ENCODE measurements at regions of chr3 and their contacts with region 1.

Region 1: DNA sequence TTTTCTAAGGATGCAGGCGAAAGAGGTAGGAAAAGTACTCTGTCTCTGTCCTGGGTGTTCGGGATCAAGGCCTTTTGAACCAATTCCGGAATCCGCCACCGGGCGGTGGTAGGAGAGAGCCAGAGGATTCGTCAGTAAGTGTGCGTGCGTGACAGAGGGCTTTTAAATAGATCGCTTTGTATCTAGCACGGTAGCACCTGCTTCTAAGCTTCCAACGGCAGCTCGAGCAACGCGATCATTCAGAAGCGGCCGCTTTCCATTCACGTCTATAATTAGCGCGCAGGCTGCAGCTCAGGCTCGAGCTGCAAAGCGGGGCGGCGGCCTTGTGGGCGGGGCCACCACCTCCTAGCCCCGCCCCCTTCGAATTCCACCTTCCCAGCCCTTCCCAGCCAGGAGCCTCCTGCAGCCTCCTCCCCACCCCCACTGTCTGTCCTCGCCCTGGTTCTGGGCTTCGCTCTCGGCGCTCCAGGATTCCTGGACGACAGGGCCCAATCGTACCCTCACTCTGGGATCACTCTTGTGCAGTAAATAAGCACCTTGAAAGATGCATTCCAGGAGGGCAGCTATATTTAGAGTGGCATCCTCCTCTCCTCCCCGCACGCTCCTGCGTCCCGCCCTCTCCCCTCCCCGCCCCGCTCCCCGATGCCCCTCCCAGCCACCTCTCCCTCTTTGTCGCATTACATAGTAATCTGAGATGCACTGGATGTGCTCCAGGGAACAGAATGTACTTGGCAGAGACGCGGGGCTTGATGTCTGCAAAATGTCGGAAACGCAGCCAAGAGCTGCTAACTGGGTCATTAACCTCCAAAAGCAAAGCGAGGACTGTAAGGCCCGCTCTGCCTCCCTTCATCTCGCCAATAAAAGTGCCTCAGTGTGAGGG is 224.1 kb upstream of the TPRG1 start:
- DNase-seq: peak; percentile 94
- ATAC-seq: peak; percentile 92

Region 2: DNA sequence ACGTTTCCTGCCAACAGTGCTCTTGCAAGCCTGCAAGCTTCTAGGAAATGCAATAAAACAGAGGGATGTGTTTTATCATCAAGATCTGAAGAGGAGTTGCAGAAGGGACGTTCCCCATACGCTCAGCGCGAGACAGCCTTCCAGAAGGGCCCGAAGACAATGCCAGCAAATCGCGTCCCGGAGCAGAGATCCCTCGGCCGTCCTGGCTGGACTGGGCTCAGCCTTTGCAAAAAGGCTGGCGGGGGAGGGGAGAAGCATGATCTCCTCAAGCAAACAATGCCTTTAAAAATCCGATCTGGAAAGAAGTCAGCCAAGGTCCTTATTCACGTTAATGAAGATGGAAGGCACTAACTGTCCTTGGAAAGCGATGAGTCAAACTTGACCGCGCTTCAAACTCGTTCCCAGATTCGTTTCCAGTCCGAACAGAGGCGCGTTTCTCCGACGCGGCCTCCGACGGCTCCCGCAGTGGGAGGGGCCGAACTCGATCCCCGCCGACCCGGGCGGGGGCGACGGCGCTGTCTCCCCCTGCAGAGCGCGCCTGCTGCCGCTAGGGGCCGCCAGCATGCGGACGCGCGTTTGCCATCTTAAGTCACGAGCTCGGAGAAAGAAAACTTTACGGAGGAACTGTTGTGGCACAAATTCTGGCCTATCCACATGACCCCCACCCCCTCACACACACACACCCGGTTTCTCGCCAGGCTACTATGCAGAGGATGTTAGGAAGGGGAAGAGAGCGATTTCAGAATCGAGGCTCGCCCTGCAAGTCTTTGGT is 1207.9 kb before region 1 on chr3:
- intact Hi-C with region 1: loop called (anchors 2 kb)
- DNase-seq: peak; percentile 91
- ATAC-seq: peak; percentile 40

Region 3: DNA sequence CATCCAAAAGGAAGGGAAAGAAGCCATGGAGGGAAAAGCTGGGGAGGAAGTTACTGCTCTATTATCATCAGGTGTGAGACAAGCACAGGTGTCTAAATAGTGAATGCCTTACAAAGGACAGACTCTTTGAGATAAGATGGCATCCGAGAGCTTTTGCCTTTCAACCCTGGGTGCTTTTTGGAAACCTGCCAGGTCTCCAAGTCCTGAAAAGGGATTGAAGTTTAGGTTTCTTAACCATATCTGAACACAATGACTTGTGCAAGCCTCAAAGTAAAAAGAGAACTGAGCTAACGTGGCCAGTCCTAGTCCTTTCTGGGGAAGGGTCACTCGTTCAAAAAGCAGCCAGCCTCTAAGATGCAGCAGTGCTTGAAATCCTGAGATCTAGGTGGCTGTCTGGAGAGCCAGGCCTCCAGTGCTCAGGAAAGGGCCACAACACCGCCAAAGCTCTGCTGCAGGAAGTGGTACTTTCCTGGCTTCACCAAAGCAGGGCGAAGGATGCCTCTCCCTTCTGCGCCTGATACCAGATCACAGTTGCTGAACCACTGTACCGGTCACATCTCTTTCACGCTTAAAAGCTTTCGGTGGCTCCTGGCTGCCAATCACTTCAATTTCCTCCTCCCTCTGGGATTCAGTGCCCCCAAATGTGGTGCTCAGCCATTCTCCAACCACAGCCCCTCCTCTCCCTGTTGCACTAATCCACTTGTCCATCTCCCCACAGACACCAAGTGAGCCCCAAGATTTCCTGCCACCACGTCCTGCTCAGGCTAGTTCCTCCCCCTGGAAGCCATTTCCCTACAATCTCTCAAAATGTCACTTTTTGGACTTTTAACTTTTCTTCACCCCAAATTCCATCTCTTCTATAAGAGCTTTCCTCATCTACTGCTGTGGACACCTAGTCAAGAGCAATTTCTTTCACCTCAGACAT is 897.8 kb before region 1 on chr3:
- intact Hi-C with region 1: loop called (anchors 5 kb)
- DNase-seq: no peak
- ATAC-seq: no peak

Region 4: DNA sequence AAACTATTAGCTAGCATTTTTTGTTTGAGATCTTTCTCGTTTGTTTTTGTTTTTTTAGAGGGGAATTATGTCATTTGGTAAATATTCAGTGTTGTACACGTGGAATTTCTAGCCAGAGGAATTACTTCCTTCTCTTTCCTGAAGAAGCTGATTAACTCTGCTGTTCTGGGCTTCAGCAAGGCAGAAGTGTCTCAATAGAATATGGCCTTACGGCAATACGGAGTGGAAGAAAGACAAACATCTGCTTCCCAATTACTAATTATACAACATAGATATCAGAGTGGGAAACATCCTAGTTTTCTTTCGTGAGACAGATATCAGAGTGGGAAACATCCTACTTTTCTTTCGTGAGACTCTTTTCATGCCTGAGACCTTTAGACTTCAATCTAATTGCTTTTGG is 1161.2 kb after region 1 on chr3:
- intact Hi-C with region 1: no loop called
- DNase-seq: no peak
- ATAC-seq: no peak